AG04450 (cell line): ENCODE measurements at regions of chr19 and their contacts with region 1.

Region 1: GRCh38 chr19:16445238-16446107 is 26.3 kb downstream of the EPS15L1 start:
- DNase-seq: no peak
- H3K4me3 ChIP-seq: no peak overlapping the region
- H3K27ac ChIP-seq: peak overlapping the region; percentile 11
- H3K27me3 ChIP-seq: no peaks in the 10 kb centered on the region
- CTCF ChIP-seq: no peak

Region 2: DNA sequence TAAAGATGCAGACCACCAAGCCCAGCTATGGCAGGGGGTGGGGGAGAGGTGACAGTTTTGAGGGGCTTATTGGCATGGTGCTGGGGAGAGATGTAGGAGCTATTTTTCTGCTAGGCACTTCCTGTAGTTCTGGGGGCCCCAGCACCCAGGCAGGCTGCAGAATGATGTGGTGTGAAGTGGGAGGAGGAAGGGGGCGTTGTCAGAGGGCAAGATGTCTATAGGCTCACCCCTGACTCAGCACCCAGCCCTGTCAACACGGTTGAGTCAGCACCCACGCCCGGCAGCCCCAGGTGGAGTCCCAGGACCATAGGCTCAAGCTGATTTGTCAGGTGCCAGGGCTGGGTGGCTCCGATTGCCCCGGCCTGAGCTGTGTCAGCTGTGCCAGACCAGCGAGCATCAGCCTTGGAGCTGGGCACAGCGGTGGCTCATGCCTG is 115.1 kb before region 1 on chr19:
- CTCF ChIA-PET with region 1: no interaction called
- POLR2A ChIA-PET with region 1: no interaction called
- DNase-seq: no peak
- H3K4me3 ChIP-seq: no peak overlapping the region
- H3K27ac ChIP-seq: peak overlapping the region; percentile 31
- H3K27me3 ChIP-seq: no peaks in the 10 kb centered on the region
- CTCF ChIP-seq: no peak

Region 3: GRCh38 chr19:17075035-17075863 is 629.8 kb after region 1 on chr19 and contains the starts of genes HAUS8 and MYO9B:
- CTCF ChIA-PET with region 1: no interaction called
- POLR2A ChIA-PET with region 1: interaction called, 10 read pairs
- DNase-seq: peak; percentile 99
- H3K4me3 ChIP-seq: peak within 1 kb of the TSS; percentile 92
- H3K27ac ChIP-seq: peak within 1 kb of the TSS; percentile 62
- H3K27me3 ChIP-seq: no peaks in the 10 kb centered on the region
- CTCF ChIP-seq: no peak
- polyA plus RNA-seq, gene HAUS8: 4.6 and 4.9 TPM in 2 replicates
- polyA plus RNA-seq, gene MYO9B: 34.5 and 42.5 TPM in 2 replicates